Posterior vena cava (tissue), 2 donors: ENCODE measurements at regions of chr20 and their contacts with region 1.

Region 1: GRCh38 chr20:2651772-2652723 is at the start of gene NOP56:
- DNase-seq: peak; percentile 97
- total RNA-seq, gene NOP56: 78.7 to 79.7 TPM

Region 2: DNA sequence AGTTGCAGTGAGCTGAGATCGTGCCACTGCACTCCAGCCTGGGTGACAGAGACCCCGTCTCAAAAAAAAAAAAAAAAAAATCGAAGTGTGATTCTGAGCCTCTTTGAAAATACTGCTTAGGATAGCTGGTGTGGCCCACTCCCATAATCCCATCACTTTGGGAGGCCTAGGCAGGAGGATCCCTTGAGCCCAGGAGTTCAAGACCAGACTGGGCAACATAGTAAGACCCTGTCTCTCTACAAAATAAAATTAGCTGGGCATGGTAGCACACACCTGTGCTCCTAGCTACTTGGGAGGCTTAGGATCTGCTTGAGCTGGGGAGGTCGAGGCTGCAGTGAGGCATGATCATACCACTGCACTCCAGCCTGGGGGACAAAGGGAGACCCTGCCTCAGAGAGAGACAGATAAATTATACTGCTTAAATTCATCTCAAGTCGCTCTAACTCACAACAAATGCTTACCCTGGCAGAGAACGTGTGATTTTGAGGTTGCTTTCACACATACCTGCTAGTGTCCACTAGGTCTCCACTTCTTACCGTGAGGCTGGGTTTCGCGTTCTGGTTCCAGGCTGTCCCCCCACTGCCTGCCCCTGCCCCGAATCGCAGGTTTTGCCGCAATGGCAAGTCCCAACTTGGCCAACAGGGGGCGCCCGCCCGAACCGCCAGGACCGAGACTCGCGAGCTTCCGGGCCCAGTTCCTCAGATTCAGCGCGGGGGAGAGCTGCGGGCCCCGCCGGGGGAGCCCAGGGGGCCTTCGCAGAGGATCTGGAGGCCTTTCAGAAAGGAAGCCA is 127.9 kb before region 1 on chr20:
- intact Hi-C with region 1: loop called (anchors 5 to 10 kb)
- DNase-seq: peak; percentile 97

Region 3: GRCh38 chr20:3669710-3670367 is 1017.8 kb after region 1 on chr20:
- intact Hi-C with region 1: loop called in 1 of 2 experiments (anchors 5 kb)
- DNase-seq: no peak